ENCODE measurements at regions of chr5 and their contacts with region 1.

Region 1: GRCh38 chr5:95591490-95591901 is 28.4 kb upstream of the GPR150 start:
- DNase-seq: no peak
- H3K4me3 ChIP-seq: no peak overlapping the region
- H3K27ac ChIP-seq: no peak overlapping the region
- H3K4me1 ChIP-seq: no peaks in the 10 kb centered on the region
- H3K27me3 ChIP-seq: no peaks in the 10 kb centered on the region
- CTCF ChIP-seq: no peak
- EP300 ChIP-seq: no peak
- POLR2A ChIP-seq: no peak

Region 2: GRCh38 chr5:96297290-96297689 is 705.8 kb after region 1 on chr5:
- in situ Hi-C with region 1: no loop called
- intact Hi-C with region 1: loop called (anchors 5 kb)
- DNase-seq: no peak
- H3K4me3 ChIP-seq: no peak overlapping the region
- H3K27ac ChIP-seq: no peak overlapping the region
- H3K4me1 ChIP-seq: no peaks in the 10 kb centered on the region
- H3K27me3 ChIP-seq: no peaks in the 10 kb centered on the region
- CTCF ChIP-seq: no peak
- EP300 ChIP-seq: no peak
- POLR2A ChIP-seq: no peak